ENCODE measurements at regions of chr19 and their contacts with region 1.

Region 1: GRCh38 chr19:2236314-2237050 is at the starts of genes PLEKHJ1 and SF3A2:
- DNase-seq: peak; percentile 99
- H3K4me3 ChIP-seq: peak within 1 kb of the TSS; percentile 74 to 98 (median 94)
- H3K27ac ChIP-seq: peak within 1 kb of the TSS; percentile 89 to 100 (median 99)
- H3K4me1 ChIP-seq: peaks cover 49 to 89% (median 71%) of the 10 kb centered on the region in 6 donors
- H3K27me3 ChIP-seq: no peaks in the 10 kb centered on the region
- CTCF ChIP-seq: peak; percentile 99 to 100 (median 100)
- POLR2A ChIP-seq: peak; percentile 3 to 79 (median 63)
- total RNA-seq, gene PLEKHJ1: 37.7 to 66.6 (median 45.6) TPM
- total RNA-seq, gene SF3A2: 28.5 to 79.7 (median 66.6) TPM

Region 2: GRCh38 chr19:2168619-2169424 is 67.7 kb before region 1 on chr19:
- intact Hi-C with region 1: loop called (anchors 10 kb)
- DNase-seq: peak; percentile 96
- H3K4me3 ChIP-seq: peak overlapping the region in 6 of 8 donors; percentile 1 to 99 (median 16)
- H3K27ac ChIP-seq: peak overlapping the region; percentile 45 to 96 (median 93)
- H3K4me1 ChIP-seq: peaks cover 72 to 97% (median 92%) of the 10 kb centered on the region in 6 donors
- H3K27me3 ChIP-seq: no peaks in the 10 kb centered on the region
- CTCF ChIP-seq: no peak
- POLR2A ChIP-seq: peak in 1 of 3 donors; percentile 32

Region 3: GRCh38 chr19:2273356-2274184 is 37.1 kb after region 1 on chr19:
- intact Hi-C with region 1: loop called (anchors 2 kb)
- DNase-seq: peak; percentile 96
- H3K4me3 ChIP-seq: peak overlapping the region; percentile 6 to 100 (median 68)
- H3K27ac ChIP-seq: peak overlapping the region; percentile 72 to 100 (median 98)
- H3K4me1 ChIP-seq: peaks cover 43 to 82% (median 68%) of the 10 kb centered on the region in 6 donors
- H3K27me3 ChIP-seq: no peaks in the 10 kb centered on the region
- CTCF ChIP-seq: peak; percentile 86 to 100 (median 98)
- POLR2A ChIP-seq: peak in 2 of 3 donors; percentile 22 to 31

Region 4: DNA sequence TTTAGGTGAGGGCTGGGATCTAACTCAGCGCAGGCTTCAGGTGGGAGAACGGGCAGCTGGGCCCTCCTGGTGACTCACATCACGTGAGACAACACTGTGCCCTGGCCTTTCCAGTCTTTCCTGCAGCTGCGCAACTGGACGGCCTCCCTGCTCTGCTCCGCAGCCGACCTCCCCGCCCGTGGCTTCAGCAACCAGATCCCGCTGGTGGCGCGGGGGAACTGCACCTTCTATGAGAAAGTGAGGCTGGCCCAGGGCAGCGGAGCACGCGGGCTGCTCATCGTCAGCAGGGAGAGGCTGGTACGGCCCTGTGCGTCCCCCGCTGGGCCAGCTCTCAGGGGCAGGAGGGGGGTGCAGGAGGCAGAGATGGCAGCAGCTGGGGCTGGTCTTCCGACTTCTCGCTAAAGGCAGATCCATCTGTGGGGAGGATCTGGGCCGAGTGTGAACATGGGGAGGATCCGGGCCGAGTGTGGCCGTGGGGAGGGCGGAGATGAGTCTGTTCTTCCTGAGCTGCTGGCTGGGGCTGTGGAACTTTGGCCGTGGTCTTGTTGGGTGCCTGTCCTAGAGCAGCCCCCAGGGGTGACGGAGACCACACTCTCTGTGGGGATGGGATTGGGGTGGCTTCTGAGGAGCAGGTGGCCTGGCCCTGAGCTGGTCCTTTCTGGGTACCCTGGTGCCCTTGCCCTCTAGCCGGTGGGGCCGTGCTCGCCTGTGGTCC is 101.0 kb after region 1 on chr19:
- intact Hi-C with region 1: no loop called
- DNase-seq: no peak
- H3K4me3 ChIP-seq: no peak overlapping the region
- H3K27ac ChIP-seq: no peak overlapping the region
- H3K4me1 ChIP-seq: peaks cover 7 to 23% (median 15%) of the 10 kb centered on the region in 6 donors
- H3K27me3 ChIP-seq: no peaks in the 10 kb centered on the region
- CTCF ChIP-seq: no peak
- POLR2A ChIP-seq: no peak

Region 5: DNA sequence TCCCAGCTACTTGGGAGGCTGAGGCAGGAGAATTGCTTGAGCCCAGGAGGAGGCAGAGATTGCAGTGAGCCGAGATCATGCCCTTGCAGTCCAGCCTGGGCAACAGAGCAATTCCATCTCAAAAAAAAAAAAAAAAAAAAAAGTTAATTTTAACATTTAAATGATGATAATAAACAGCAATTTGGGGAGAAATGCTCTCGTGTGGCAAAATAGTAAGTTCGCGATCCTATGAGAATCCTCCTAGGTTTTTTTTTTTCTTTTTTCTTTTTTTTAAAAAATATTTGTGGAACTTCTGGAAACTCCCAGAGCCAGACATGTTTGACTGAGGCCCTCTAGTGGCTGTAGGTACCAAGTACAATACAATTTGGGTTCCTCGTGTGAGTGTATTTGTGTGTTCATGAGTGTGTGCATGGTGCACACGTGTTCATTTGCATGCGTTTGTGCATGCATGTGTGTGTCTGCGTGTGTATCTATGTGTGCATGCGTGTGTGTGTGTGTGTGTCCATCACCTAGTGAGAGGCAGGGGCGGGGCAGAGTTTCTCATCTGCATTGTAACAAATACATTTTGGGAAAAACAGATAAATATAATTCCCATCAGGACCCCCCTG is 154.7 kb after region 1 on chr19:
- intact Hi-C with region 1: loop called (anchors 5 kb)
- DNase-seq: no peak
- H3K4me3 ChIP-seq: no peak overlapping the region
- H3K27ac ChIP-seq: no peak overlapping the region
- H3K4me1 ChIP-seq: peaks cover 0 to 36% (median 15%) of the 10 kb centered on the region in 6 donors
- H3K27me3 ChIP-seq: no peaks in the 10 kb centered on the region
- CTCF ChIP-seq: peak; percentile 61 to 90 (median 84)
- POLR2A ChIP-seq: no peak